ENCODE measurements at regions of chr10 and their contacts with region 1.

Region 1: DNA sequence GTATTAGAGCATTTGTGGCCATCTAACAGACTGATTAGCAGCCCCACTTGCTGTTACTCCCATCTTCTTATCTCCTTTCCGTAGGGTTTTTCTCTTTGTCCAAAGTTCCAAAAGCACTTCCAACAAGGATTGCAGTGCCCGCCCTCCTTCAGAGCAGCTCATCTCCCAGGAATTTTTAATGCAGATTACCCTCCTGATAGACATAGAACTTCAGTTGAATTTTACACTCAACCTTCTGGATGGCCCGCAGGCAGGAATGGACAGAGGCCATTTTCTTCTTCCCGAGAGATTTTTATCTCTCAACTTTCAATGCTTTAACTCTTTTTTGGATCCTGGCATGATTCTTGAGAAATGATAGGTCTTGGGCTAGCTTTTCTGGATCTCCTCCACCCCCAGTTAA is 23.3 kb downstream of the PRKG1 start:
- DNase-seq: no peak
- ATAC-seq: no peak
- H3K4me3 ChIP-seq: no peak overlapping the region
- H3K27ac ChIP-seq: no peak overlapping the region
- H3K4me1 ChIP-seq: peaks cover 0 to 48% (median 24%) of the 10 kb centered on the region in 12 donors
- H3K27me3 ChIP-seq: no peaks in the 10 kb centered on the region
- CTCF ChIP-seq: no peak
- POLR2A ChIP-seq: no peak

Region 2: DNA sequence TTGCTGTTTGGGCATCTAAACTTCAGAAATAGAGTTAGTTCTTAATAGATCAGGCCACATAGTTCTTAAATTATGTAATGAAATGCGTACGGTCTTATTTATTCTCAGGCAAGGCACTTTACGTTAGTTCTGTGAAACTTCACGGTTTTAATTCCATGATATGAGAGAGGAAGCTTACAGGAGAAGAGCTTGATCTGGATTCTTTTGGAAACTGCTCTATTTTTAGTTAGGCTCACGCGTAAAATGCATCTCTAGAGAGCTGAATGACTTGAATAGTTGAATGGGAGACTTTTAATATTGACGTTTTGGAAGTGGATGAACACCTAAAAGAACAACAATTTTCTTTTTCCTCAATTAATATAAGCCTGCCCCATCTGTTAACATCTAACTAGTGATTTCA is 47.8 kb after region 1 on chr10:
- intact Hi-C with region 1: loop called in 1 of 10 experiments (anchors 5 kb)
- DNase-seq: no peak
- ATAC-seq: peak; percentile 42 to 70 (median 60)
- H3K4me3 ChIP-seq: peak overlapping the region in 2 of 12 donors; percentile 0
- H3K27ac ChIP-seq: peak overlapping the region in 11 of 12 donors; percentile 5 to 72 (median 35)
- H3K4me1 ChIP-seq: peaks cover 0 to 49% (median 7%) of the 10 kb centered on the region in 12 donors
- H3K27me3 ChIP-seq: no peaks in the 10 kb centered on the region
- CTCF ChIP-seq: no peak
- POLR2A ChIP-seq: no peak

Measured in heart left ventricle (tissue), 16 donors.